ENCODE measurements at regions of chr14 and their contacts with region 1.

Region 1: GRCh38 chr14:77290741-77291140 is 19.7 kb upstream of the NGB start:
- DNase-seq: no peak
- H3K4me3 ChIP-seq: no peak overlapping the region
- H3K27ac ChIP-seq: no peak overlapping the region
- H3K4me1 ChIP-seq: no peaks in the 10 kb centered on the region
- H3K27me3 ChIP-seq: no peaks in the 10 kb centered on the region

Region 2: DNA sequence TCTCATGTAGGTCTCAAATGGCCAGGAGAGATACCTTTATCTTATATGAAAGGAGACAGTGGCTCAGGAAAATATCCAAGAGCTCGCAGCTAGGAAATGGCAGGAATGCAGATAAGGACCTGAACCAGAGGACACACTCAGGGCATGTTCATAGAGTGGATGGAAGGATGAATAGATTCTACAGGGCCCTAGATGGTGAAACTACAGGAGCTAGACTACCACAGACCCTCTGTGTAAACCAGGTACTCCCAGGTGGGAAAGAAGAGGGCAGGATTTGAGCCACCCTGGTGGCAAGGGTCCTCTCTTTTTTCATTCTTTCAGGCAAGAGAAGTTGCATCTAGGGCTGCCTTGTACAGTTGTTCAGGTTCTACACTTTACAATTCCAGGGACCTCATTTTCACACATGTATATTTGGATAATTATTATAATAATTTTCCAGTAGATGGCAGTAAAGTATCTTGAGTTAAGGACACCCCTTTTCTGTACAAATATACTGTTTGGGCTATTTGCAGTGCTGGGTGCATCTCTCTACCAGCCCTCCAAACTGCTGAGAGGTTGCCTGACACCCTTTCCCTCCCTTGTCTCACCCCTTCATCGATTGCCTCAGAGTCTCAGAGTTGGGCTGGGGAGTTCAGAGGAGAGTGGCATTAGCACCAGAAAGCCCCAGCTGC is 138.7 kb before region 1 on chr14:
- in situ Hi-C with region 1: loop called (anchors 10 kb)
- DNase-seq: peak; percentile 61
- H3K4me3 ChIP-seq: no peak overlapping the region
- H3K27ac ChIP-seq: no peak overlapping the region
- H3K4me1 ChIP-seq: no peaks in the 10 kb centered on the region
- H3K27me3 ChIP-seq: peaks cover 19% of the 10 kb centered on the region

Region 3: GRCh38 chr14:77372304-77372841 is 81.6 kb after region 1 on chr14:
- in situ Hi-C with region 1: no loop called
- DNase-seq: peak; percentile 46
- H3K4me3 ChIP-seq: no peak overlapping the region
- H3K27ac ChIP-seq: no peak overlapping the region
- H3K4me1 ChIP-seq: peaks cover 5% of the 10 kb centered on the region; the same call in 1 of the 2 replicates
- H3K27me3 ChIP-seq: no peaks in the 10 kb centered on the region

Region 4: GRCh38 chr14:77469067-77469505 is 178.3 kb after region 1 on chr14:
- in situ Hi-C with region 1: no loop called
- DNase-seq: no peak
- H3K4me3 ChIP-seq: no peak overlapping the region
- H3K27ac ChIP-seq: no peak overlapping the region
- H3K4me1 ChIP-seq: no peaks in the 10 kb centered on the region
- H3K27me3 ChIP-seq: peaks cover under 1% of the 10 kb centered on the region; the same call in 1 of the 2 replicates

Region 5: GRCh38 chr14:77730976-77731497 is 440.3 kb after region 1 on chr14:
- in situ Hi-C with region 1: no loop called
- DNase-seq: peak; percentile 32
- H3K4me3 ChIP-seq: no peak overlapping the region
- H3K27ac ChIP-seq: no peak overlapping the region
- H3K4me1 ChIP-seq: no peaks in the 10 kb centered on the region
- H3K27me3 ChIP-seq: no peaks in the 10 kb centered on the region